Mammary epithelial cell (primary cell): ENCODE measurements at regions of chr10 and their contacts with region 1.

Region 1: GRCh38 chr10:13302814-13303555 is 3.1 kb upstream of the PHYH start:
- DNase-seq: no peak
- H3K4me3 ChIP-seq: no peak overlapping the region
- H3K27ac ChIP-seq: no peak overlapping the region
- H3K4me1 ChIP-seq: peaks cover 15% of the 10 kb centered on the region
- H3K27me3 ChIP-seq: no peaks in the 10 kb centered on the region
- CTCF ChIP-seq: no peak

Region 2: GRCh38 chr10:12299222-12299965 is 1003.6 kb before region 1 on chr10:
- CTCF ChIA-PET with region 1: interaction called, 15 read pairs
- dilution Hi-C with region 1: no loop called
- in situ Hi-C with region 1: no loop called
- intact Hi-C with region 1: no loop called
- DNase-seq: no peak
- H3K4me3 ChIP-seq: no peak overlapping the region
- H3K27ac ChIP-seq: no peak overlapping the region
- H3K4me1 ChIP-seq: no peaks in the 10 kb centered on the region
- H3K27me3 ChIP-seq: no peaks in the 10 kb centered on the region
- CTCF ChIP-seq: no peak

Region 3: DNA sequence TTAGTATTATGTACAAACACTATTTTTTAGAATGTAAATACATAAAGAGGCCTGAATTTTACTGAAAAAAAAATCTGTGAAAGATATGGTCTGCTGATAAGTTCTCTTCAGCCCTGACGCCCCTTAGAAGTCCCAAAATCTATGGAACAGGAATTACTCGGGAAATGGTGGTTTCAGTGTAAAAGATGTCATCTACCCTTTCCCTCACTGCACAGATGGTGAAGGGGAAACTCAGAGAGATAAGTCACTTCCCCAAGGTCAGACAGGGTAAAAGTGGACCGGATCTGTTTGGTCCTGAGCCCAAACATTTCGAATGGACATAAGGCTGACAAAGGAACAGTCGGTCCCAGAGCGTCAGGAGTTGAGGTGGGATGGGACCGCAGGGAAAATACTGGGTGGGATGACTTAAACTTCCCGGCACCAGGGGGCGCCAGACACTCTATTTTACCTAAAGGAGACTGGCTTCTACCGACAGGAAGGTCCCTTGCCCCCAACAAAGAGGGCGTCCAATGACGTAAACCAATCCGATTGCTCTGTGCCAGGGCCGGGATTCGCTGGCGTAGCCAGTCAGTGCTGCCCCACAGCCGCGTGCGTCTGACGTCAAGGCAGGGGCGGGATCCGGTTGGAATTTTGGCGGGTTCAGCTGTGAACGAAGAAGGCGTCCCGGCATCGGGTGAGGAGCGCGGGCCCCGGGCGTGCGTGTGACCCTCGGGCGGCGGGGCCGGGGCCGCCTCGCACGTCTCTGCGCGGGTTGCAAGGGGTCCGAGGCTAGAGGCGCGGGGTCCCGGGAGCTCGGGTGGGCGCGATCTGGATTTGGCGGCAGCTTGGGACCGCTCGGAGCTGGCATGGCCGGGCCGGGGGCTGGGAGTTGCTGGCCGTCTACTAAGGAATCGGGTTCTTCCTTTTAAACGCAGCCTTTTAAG is 141.8 kb before region 1 on chr10 and contains the start of gene MCM10:
- CTCF ChIA-PET with region 1: interaction called, 3 read pairs
- dilution Hi-C with region 1: no loop called
- in situ Hi-C with region 1: no loop called
- intact Hi-C with region 1: loop called (anchors 1 kb)
- DNase-seq: peak; percentile 99
- H3K4me3 ChIP-seq: peak within 1 kb of the TSS; percentile 59 to 84 (median 69)
- H3K27ac ChIP-seq: peak within 1 kb of the TSS; percentile 78
- H3K4me1 ChIP-seq: peaks cover 12% of the 10 kb centered on the region
- H3K27me3 ChIP-seq: no peaks in the 10 kb centered on the region
- CTCF ChIP-seq: peak; percentile 79 to 81
- total RNA-seq, gene MCM10: 1.5 to 25.4 TPM

Region 4: DNA sequence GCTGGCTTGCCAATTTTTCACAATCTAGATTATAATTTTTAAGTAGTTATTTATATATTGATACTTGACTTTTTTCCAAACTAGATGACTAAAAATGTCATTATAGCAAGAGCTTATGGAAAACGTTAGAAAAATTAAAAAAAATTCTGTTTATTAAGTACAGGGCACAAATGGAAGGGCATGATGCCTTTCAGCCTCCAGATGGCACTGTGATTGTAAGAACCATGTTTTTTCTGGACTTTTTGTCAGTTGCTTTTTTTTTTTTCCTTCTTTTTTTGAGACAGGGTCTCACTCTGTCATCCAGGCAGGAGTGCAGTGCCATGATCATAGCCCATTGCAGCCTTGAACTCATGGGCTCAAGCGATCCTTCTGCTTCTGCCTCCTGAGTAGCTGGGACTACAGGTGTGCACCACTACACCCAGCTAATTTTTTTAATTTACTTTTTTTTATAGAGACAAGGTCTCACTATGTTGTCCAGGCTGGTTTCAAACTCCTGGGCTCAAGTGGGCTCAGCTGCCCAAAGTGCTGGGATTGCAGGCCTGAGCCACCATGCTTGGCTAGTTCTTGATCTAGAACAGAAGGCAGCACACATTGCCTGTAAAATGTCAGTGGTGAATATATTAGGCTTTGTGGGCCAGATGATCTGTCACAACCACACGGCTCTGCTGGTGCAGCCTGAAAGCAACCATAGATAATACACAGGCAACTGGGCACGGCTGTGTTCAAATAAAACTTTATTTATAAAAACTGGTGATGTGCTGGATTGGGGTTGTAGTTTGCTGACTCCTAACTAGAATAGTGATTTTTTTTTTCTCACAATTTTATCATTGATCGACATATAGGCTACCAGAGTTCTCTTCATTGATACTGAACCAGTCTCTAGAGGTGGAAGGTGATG is 96.2 kb before region 1 on chr10:
- CTCF ChIA-PET with region 1: interaction called, 4 read pairs
- dilution Hi-C with region 1: no loop called
- in situ Hi-C with region 1: no loop called
- intact Hi-C with region 1: loop called (anchors 1 kb)
- DNase-seq: no peak
- H3K4me3 ChIP-seq: no peak overlapping the region
- H3K27ac ChIP-seq: no peak overlapping the region
- H3K4me1 ChIP-seq: no peaks in the 10 kb centered on the region
- H3K27me3 ChIP-seq: no peaks in the 10 kb centered on the region
- CTCF ChIP-seq: peak; percentile 49 to 50

Region 5: DNA sequence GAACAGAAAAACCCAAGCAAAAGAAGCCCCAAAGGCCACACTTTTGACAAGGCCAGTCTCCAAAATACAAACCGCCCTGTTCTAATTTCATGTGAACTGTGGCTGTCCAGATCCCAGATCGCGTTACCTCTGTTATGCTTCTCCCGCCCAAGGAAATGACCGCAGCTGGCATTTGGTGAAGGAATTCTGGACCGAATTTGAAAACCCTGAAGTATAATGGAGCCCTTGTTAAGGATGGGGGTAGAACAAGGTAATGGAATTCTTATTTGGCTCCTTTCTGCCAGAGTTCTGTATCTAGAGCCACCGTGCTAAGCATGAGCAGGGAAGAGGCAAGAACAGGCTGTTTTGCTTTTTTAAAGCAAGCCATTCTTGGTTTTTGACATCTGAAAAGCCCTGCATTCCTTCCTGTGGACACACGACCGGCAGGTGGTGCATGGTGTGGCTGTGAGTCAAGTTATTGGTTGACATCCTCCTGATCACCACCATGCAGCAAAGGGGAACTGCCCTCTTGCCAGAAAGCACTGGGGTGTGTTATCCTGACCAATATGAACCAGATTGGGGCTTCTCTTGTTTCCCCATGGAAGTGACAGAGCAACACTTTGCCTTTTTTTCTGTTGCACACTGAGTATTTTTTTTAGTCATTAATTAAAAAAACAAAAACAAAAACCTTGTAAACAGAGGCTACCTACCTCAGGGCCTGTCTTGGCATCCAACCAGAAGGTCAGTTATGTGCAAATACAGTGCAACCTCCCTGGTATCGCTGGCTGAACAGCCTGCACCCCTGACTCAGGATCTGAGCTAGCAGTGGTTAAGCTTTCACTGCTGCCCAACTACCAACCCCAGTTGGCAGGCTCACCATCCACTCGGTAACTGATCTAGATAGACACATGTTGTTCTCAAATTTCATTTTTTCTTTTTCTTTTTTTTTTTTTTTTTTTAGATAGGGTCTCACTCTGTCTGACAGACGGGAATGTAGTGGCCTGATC is 83.0 kb before region 1 on chr10:
- CTCF ChIA-PET with region 1: no interaction called
- dilution Hi-C with region 1: loop called (anchors 5 kb)
- in situ Hi-C with region 1: no loop called
- intact Hi-C with region 1: loop called (anchors 1 kb)
- DNase-seq: peak; percentile 57
- H3K4me3 ChIP-seq: peak overlapping the region in 1 of 3 experiments; percentile 20
- H3K27ac ChIP-seq: no peak overlapping the region
- H3K4me1 ChIP-seq: peaks cover 8% of the 10 kb centered on the region
- H3K27me3 ChIP-seq: no peaks in the 10 kb centered on the region
- CTCF ChIP-seq: peak; percentile 41 to 53

Region 6: GRCh38 chr10:13348216-13349017 is 45.4 kb after region 1 on chr10 and contains the start of gene SEPHS1:
- CTCF ChIA-PET with region 1: no interaction called
- dilution Hi-C with region 1: no loop called
- in situ Hi-C with region 1: no loop called
- intact Hi-C with region 1: loop called (anchors 1 kb)
- DNase-seq: peak; percentile 60
- H3K4me3 ChIP-seq: peak within 1 kb of the TSS; percentile 66 to 93 (median 69)
- H3K27ac ChIP-seq: peak within 1 kb of the TSS; percentile 72
- H3K4me1 ChIP-seq: peaks cover 18% of the 10 kb centered on the region
- H3K27me3 ChIP-seq: no peaks in the 10 kb centered on the region
- CTCF ChIP-seq: no peak
- total RNA-seq, gene SEPHS1: 30.2 to 34.6 TPM